ENCODE measurements at regions of chr10 and their contacts with region 1.

Region 1: GRCh38 chr10:119178372-119179119 is at the start of gene PRDX3:
- DNase-seq: peak; percentile 85
- ATAC-seq: peak; percentile 90
- H3K4me3 ChIP-seq: peak within 1 kb of the TSS; percentile 75 to 94 (median 81)
- H3K27ac ChIP-seq: peak within 1 kb of the TSS; percentile 93
- H3K4me1 ChIP-seq: peaks cover 52% of the 10 kb centered on the region
- H3K27me3 ChIP-seq: no peaks in the 10 kb centered on the region; a peak in 1 of 5 replicates
- CTCF ChIP-seq: peak; percentile 44
- EP300 ChIP-seq: no peak
- POLR2A ChIP-seq: peak; percentile 89 to 95
- RAD21 ChIP-seq: no peak
- total RNA-seq, gene PRDX3: 407 and 643 TPM in 2 replicates

Region 2: DNA sequence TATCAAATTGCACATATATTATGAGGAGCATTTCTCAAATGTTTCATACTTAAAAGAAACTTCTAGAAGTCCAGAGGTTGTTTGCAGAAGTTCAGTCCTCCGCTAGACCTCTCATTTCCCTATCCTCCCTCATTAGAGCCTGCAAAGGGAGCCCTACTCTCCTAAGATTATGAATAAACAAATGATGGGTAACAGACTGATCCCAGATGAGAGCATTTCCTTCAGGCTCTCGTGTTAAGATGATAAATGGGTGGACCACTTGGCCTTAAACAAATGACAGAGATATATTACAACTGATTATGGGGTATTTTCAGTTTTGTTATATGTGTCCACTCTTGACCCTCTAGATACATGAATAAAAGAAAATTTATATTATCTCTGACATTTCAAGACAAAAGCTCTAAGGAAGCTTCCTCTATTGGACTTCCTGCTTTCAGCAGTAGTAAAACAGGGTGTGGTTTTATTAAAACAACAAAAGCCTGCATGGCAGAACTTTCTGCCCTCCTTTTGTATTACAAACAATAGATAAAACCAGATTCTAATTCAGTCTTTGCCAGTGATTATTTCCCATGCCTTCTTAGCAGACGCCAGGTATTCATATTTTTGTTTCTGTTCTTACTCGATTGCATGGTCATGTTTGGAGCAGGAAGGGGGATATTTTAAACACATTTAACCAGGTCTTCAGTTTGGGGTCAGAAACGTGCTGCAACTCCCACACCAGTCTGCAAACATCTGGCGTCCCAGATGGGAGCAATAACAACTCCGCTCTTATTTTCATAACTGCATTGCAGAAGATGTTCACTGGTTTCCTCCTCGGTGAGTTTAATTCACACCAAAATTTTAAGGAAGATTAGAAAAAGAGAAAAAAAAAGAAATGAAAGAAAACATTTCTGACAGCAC is 784.0 kb before region 1 on chr10:
- CTCF ChIA-PET with region 1: no interaction called
- POLR2A ChIA-PET with region 1: no interaction called
- in situ Hi-C with region 1: no loop called
- intact Hi-C with region 1: no loop called
- DNase-seq: no peak
- ATAC-seq: no peak
- H3K4me3 ChIP-seq: no peak overlapping the region
- H3K27ac ChIP-seq: no peak overlapping the region
- H3K4me1 ChIP-seq: peaks cover 13% of the 10 kb centered on the region
- H3K27me3 ChIP-seq: no peaks in the 10 kb centered on the region
- CTCF ChIP-seq: no peak
- EP300 ChIP-seq: no peak
- POLR2A ChIP-seq: no peak
- RAD21 ChIP-seq: no peak

Region 3: GRCh38 chr10:118564652-118565051 is 613.9 kb before region 1 on chr10:
- CTCF ChIA-PET with region 1: no interaction called
- POLR2A ChIA-PET with region 1: no interaction called
- in situ Hi-C with region 1: no loop called
- intact Hi-C with region 1: no loop called
- DNase-seq: no peak
- ATAC-seq: peak; percentile 56
- H3K4me3 ChIP-seq: no peak overlapping the region
- H3K27ac ChIP-seq: no peak overlapping the region
- H3K4me1 ChIP-seq: peaks cover 6% of the 10 kb centered on the region
- H3K27me3 ChIP-seq: peaks cover 0 to 21% of the 10 kb centered on the region in 2 experiments; a peak in 2 of 5 replicates
- CTCF ChIP-seq: peak; percentile 58
- EP300 ChIP-seq: no peak
- POLR2A ChIP-seq: no peak
- RAD21 ChIP-seq: no peak

Region 4: GRCh38 chr10:119165171-119166110 is 13.1 kb before region 1 on chr10 and contains the start of gene SFXN4:
- CTCF ChIA-PET with region 1: no interaction called
- POLR2A ChIA-PET with region 1: interaction called, 14 read pairs
- in situ Hi-C with region 1: no loop called
- intact Hi-C with region 1: no loop called
- DNase-seq: peak; percentile 63
- ATAC-seq: peak; percentile 90
- H3K4me3 ChIP-seq: peak within 1 kb of the TSS; percentile 75 to 81 (median 76)
- H3K27ac ChIP-seq: peak within 1 kb of the TSS; percentile 91
- H3K4me1 ChIP-seq: peaks cover 26% of the 10 kb centered on the region
- H3K27me3 ChIP-seq: no peaks in the 10 kb centered on the region
- CTCF ChIP-seq: peak; percentile 64
- EP300 ChIP-seq: no peak
- POLR2A ChIP-seq: peak; percentile 60 to 77
- RAD21 ChIP-seq: peak; percentile 50; the same call in 1 of the 2 replicates
- total RNA-seq, gene SFXN4: 47.4 and 64.9 TPM in 2 replicates